ENCODE measurements at regions of chr2 and their contacts with region 1.

Region 1: GRCh38 chr2:158179660-158180059 is 78.0 kb downstream of the UPP2 start:
- DNase-seq: no peak
- H3K4me3 ChIP-seq: no peak overlapping the region
- H3K27ac ChIP-seq: no peak overlapping the region
- H3K27me3 ChIP-seq: no peaks in the 10 kb centered on the region
- CTCF ChIP-seq: peak in 55 of 56 donors; percentile 20 to 79 (median 56)

Region 2: DNA sequence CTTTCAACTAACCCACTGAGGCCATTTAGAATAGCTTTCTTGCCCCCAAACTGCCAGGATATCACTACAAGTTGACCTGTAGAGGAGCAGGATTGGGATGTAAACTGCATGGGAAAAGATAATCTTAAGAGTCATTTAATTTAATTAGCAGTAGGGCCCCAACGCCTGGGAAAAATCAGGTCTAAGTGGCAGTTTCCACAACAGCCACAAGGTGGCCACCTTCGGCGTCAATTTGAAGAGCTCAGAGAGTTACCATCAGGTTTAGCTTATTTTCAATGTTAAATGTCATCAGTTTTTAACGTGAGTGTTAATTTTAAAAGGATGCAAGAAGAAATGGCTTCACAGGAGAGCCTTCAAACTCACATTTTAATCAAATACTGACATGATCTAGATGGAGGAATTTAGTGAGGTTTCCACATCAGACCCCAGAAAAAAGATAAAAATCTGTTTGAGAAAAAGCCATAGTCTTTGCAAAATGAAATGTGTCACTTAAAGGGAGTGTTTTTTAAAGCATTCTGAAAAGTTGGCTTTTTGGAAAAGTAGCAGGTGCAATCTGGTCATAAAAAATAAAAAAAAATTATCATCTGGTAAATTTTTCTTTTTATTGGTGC is 155.3 kb before region 1 on chr2:
- intact Hi-C with region 1: loop called in 1 of 2 experiments (anchors 10 kb)
- DNase-seq: peak in 9 of 10 donors; percentile 35 to 71 (median 51)
- H3K4me3 ChIP-seq: no peak overlapping the region
- H3K27ac ChIP-seq: no peak overlapping the region
- H3K27me3 ChIP-seq: no peaks in the 10 kb centered on the region
- CTCF ChIP-seq: peak; percentile 75 to 95 (median 85)

Region 3: GRCh38 chr2:158346032-158346431 is 166.4 kb after region 1 on chr2:
- intact Hi-C with region 1: no loop called
- DNase-seq: no peak
- H3K4me3 ChIP-seq: no peak overlapping the region
- H3K27ac ChIP-seq: no peak overlapping the region
- H3K27me3 ChIP-seq: no peaks in the 10 kb centered on the region
- CTCF ChIP-seq: no peak

Region 4: GRCh38 chr2:158456309-158457066 is 276.8 kb after region 1 on chr2 and contains the starts of genes CCDC148 and PKP4:
- intact Hi-C with region 1: loop called (anchors 5 kb)
- DNase-seq: peak; percentile 81 to 96 (median 92)
- H3K4me3 ChIP-seq: peak within 1 kb of the TSS; percentile 59 to 98 (median 87)
- H3K27ac ChIP-seq: peak within 1 kb of the TSS; percentile 54 to 99 (median 95)
- H3K27me3 ChIP-seq: no peaks in the 10 kb centered on the region
- CTCF ChIP-seq: peak in 20 of 56 donors; percentile 3 to 53 (median 21)
- total RNA-seq, gene CCDC148: 4.8 to 15.3 (median 8.3) TPM
- total RNA-seq, gene PKP4: 163 to 459 (median 237) TPM

Region 5: DNA sequence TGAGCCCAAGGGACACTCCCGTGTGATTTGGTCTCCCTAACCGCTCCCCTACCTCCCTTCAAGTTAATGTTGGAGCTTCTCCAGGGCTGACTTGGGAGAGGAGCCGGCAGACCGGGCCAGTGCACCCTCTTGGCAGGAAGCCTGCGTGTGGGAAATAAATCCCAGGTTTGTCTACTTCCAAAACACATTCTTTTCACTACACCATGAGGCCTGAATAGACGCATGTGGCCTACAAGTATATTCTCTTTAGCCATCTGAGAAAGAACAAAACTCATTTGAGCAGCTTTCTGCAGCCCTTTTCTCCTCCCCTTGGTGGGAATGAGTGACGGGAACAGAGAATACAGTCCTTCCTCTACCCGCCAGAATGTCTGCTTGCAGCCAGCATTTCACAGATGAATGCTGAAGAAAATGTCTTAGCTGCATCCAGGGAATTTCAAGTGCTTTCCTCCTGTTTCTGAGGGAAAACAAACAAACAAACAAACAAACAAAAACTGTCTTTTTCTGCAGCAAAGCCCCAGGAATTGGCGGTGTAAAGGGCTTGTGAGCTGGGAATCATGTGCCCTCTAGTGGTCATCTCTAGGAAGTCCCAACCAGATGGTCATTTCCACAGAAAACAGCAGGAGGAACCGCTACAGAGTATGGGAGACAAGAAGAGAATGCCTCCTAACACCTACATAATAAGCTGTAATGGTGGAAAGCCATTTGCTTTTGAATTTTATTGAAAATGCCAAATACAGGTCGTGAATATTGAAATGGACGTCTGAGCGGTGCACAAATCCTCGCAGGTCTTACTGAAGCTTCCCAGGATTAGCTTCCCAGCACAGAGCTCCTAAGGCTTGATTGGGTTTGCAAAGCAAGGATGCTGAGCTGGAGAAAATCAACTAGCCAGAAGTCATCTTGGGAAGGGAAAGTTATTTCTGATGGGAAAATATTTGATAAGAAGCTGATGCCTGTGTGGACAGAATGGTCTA is 574.3 kb after region 1 on chr2:
- intact Hi-C with region 1: loop called in 1 of 2 experiments (anchors 2 kb)
- DNase-seq: peak in 3 of 10 donors; percentile 25 to 62 (median 60)
- H3K4me3 ChIP-seq: peak overlapping the region in 55 of 59 donors; percentile 11 to 64 (median 40)
- H3K27ac ChIP-seq: peak overlapping the region in 29 of 59 donors; percentile 2 to 83 (median 37)
- H3K27me3 ChIP-seq: no peaks in the 10 kb centered on the region
- CTCF ChIP-seq: peak; percentile 87 to 98 (median 94)